A549 (cell line): ENCODE measurements at regions of chr20 and their contacts with region 1.

Region 1: DNA sequence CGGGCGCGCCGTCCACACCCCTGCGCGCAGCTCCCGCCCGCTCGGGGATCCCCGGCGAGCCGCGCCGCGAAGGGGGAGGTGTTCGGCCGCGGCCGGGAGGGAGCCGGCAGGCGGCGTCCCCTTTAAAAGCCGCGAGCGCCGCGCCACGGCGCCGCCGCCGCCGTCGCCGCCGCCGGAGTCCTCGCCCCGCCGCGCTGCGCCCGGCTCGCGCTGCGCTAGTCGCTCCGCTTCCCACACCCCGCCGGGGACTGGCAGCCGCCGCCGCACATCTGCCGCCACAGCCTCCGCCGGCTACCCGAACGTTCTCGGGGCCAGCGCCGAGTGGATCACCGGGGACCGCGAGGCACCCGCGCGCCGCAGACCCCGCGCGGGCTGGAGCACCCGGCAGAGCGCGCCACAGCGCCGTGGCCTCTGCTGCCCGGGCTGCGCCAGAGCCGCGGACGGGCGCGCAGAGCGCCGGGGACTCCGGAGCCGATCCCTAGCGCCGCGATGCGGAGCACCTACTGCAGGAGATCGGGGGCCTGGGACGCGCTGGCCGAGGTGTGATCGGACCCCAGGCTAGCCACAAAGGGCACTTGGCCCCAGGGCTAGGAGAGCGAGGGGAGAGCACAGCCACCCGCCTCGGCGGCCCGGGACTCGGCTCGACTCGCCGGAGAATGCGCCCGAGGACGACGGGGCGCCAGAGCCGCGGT is at the start of gene BMP2:
- DNase-seq: peak; percentile 29 to 48
- ATAC-seq: peak; percentile 88 to 89
- H3K4me3 ChIP-seq: peak within 1 kb of the TSS; percentile 67
- H3K27ac ChIP-seq: peak within 1 kb of the TSS; percentile 14 to 82; a peak in 5 of 6 replicates
- H3K4me1 ChIP-seq: 0 out of 3 replicates have a peak, but pooled peaks cover 6% of the 10 kb centered on the region
- CTCF ChIP-seq: peak; percentile 33; the same call in 2 of the 3 replicates
- EP300 ChIP-seq: no peak
- POLR2A ChIP-seq: no peak
- RAD21 ChIP-seq: no peak
- polyA plus RNA-seq, gene BMP2: 0.23 and 0.42 TPM in 2 replicates

Region 2: DNA sequence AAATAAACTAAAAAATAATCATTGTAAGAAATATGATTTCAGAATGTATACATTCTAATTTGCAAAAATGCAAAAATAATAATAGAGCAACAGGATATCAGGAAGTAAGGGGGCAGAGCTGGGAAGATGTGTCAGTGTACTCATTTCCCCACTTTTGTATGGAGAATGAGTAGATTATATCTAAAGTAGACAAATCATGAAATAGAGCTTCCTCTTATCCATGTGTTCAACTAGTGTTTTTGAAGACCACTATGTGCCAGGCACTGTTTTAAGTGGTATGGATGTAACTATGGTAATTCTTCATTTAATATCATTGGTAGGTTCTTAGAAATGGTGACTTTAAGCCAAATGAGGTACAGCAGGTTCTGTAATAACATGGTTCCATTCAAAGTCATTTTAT is 17.2 kb before region 1 on chr20:
- CTCF ChIA-PET with region 1: interaction called, 17 read pairs
- POLR2A ChIA-PET with region 1: no interaction called
- DNase-seq: no peak
- ATAC-seq: no peak
- H3K4me3 ChIP-seq: no peak overlapping the region
- H3K27ac ChIP-seq: no peak overlapping the region
- H3K4me1 ChIP-seq: no peaks in the 10 kb centered on the region
- CTCF ChIP-seq: no peak
- EP300 ChIP-seq: no peak
- POLR2A ChIP-seq: no peak
- RAD21 ChIP-seq: no peak

Region 3: GRCh38 chr20:6756693-6757595 is 10.7 kb before region 1 on chr20:
- CTCF ChIA-PET with region 1: interaction called, 17 read pairs
- POLR2A ChIA-PET with region 1: no interaction called
- DNase-seq: no peak
- ATAC-seq: no peak
- H3K4me3 ChIP-seq: no peak overlapping the region
- H3K27ac ChIP-seq: no peak overlapping the region
- H3K4me1 ChIP-seq: no peaks in the 10 kb centered on the region
- CTCF ChIP-seq: no peak
- EP300 ChIP-seq: no peak
- POLR2A ChIP-seq: no peak
- RAD21 ChIP-seq: no peak

Region 4: DNA sequence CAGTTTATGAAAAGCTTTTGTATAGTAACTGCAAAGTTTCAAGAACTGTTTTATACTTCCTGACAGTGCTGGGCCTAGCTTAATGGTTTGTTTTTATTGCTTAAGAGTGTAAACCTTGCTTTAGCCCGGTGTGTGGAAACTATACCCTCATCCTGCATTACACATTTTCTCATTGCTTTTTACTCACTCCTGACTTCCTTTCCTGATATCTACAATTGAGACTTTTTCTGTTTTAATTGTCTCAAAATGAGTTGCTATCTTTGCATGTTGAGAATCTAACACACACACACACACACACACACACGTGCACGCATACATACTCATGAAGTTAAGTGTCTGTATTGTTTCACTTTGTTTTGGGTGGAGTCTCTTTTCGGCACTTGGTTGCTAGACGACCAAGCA is 16.5 kb after region 1 on chr20:
- CTCF ChIA-PET with region 1: interaction called, 16 read pairs
- POLR2A ChIA-PET with region 1: no interaction called
- DNase-seq: no peak
- ATAC-seq: no peak
- H3K4me3 ChIP-seq: no peak overlapping the region
- H3K27ac ChIP-seq: no peak overlapping the region
- H3K4me1 ChIP-seq: no peaks in the 10 kb centered on the region
- CTCF ChIP-seq: no peak
- EP300 ChIP-seq: no peak
- POLR2A ChIP-seq: no peak
- RAD21 ChIP-seq: no peak

Region 5: DNA sequence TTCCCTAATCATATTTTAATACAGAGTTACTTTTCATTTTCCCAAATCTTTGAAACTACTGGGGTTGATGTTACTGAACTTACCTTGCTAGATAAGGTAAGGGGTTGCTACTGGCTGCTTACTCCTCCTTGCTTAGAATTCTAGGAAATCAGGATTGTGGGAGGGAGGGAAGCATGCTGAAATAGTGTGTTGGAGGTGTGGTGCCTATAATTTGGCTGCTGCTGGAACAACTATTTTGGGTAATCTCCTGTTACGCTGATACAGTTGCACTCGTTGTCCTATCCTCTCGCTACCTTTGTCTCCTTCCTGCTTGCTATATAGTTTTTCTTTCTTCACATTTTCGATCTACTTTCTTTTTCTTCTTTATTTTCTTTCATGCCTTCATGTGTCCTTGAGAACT is 83.5 kb after region 1 on chr20:
- CTCF ChIA-PET with region 1: no interaction called
- POLR2A ChIA-PET with region 1: no interaction called
- DNase-seq: no peak
- ATAC-seq: no peak
- H3K4me3 ChIP-seq: no peak overlapping the region
- H3K27ac ChIP-seq: no peak overlapping the region
- H3K4me1 ChIP-seq: no peaks in the 10 kb centered on the region
- CTCF ChIP-seq: no peak
- EP300 ChIP-seq: no peak
- POLR2A ChIP-seq: no peak
- RAD21 ChIP-seq: no peak

Region 6: GRCh38 chr20:6956574-6956973 is 188.9 kb after region 1 on chr20:
- CTCF ChIA-PET with region 1: no interaction called
- POLR2A ChIA-PET with region 1: no interaction called
- DNase-seq: no peak
- ATAC-seq: no peak
- H3K4me3 ChIP-seq: no peak overlapping the region
- H3K27ac ChIP-seq: no peak overlapping the region
- H3K4me1 ChIP-seq: no peaks in the 10 kb centered on the region
- CTCF ChIP-seq: no peak
- EP300 ChIP-seq: no peak
- POLR2A ChIP-seq: no peak
- RAD21 ChIP-seq: no peak

Region 7: DNA sequence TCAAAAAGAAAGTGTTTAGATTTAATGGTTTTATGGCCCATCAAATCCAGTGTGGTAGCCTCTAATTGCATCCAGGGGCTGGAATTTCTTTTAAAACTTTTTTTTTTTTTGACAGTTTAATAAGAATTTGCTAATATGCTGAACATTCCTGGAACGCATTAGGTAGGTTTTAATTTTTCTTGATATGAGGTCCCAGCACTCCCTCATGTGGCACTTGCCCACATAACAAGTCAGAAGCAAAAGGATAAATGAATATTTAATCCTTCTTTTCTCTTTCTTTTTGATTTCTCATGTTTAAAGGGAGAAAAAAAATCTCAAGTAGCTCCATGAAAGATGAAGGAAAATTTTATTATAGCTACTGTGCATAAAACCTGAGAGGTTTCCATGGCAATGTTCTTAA is 1159.1 kb after region 1 on chr20:
- CTCF ChIA-PET with region 1: interaction called, 15 read pairs
- POLR2A ChIA-PET with region 1: no interaction called
- DNase-seq: peak in 1 of 2 experiments; percentile 44
- ATAC-seq: no peak; a peak in 1 of 6 replicates
- H3K4me3 ChIP-seq: no peak overlapping the region
- H3K27ac ChIP-seq: no peak overlapping the region
- H3K4me1 ChIP-seq: no peaks in the 10 kb centered on the region
- CTCF ChIP-seq: peak; percentile 69
- EP300 ChIP-seq: no peak
- POLR2A ChIP-seq: no peak
- RAD21 ChIP-seq: peak; percentile 70 to 72